ENCODE measurements at regions of chr3 and their contacts with region 1.

Region 1: GRCh38 chr3:177359593-177360357 is 162.5 kb upstream of the TBL1XR1 start:
- DNase-seq: peak; percentile 95
- H3K4me3 Mint-ChIP-seq: peak overlapping the region; percentile 61
- H3K27ac Mint-ChIP-seq: peak overlapping the region; percentile 92
- H3K4me1 Mint-ChIP-seq: peaks cover 43% of the 10 kb centered on the region
- H3K27me3 Mint-ChIP-seq: no peaks in the 10 kb centered on the region

Region 2: GRCh38 chr3:177197041-177197727 is 162.6 kb before region 1 on chr3 and contains the start of gene TBL1XR1:
- CTCF ChIA-PET with region 1: interaction called, 23 read pairs
- POLR2A ChIA-PET with region 1: interaction called, 374 read pairs
- DNase-seq: peak; percentile 90
- H3K4me3 Mint-ChIP-seq: peak within 1 kb of the TSS; percentile 98
- H3K27ac Mint-ChIP-seq: peak within 1 kb of the TSS; percentile 97
- H3K4me1 Mint-ChIP-seq: peaks cover 63% of the 10 kb centered on the region
- H3K27me3 Mint-ChIP-seq: no peaks in the 10 kb centered on the region
- total RNA-seq, gene TBL1XR1: 178 to 187 TPM

Region 3: DNA sequence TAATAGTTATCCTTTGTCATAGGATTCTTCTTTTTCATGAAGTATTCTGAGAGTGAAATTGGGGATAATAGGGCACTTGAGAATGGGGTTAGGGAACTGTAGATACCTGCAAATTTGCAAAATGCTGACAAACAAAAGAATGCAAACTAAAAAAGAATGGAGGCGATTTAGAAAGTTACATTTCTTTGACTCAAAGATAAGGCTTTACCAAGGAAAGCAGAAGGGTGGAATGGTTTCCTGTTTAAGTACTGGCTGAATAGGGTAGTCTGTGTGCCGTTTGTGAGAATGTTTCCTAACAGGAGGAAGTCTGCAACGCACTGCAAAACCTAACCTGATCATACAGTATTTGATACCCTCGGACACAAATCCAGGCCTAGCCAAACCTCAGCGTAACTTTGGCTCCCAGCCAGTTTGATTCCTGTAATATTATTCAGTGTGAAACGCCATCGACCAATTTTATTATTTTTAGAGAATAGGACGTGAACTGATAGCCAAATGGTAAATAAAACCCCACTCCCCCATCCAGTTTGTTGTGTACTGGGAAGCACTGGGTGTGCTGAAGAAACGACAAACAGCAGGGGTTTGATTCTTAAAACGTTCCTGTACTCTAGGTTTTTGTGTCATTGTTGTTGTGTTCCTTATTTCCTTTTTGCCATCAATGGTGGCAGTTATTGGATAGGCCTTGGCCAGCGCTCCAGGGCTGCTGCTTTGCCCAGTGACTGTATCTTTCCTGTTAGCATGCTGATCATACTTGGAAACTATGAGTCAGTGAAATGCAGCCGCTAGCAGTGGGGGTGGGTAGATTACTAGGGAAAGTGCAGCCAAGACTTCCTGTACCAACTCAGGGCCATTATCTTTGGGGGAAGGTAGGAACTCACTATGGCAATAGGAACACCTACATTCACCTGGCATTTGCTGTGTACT is 14.5 kb before region 1 on chr3:
- CTCF ChIA-PET with region 1: interaction called, 5 read pairs
- POLR2A ChIA-PET with region 1: interaction called, 36 read pairs
- DNase-seq: peak; percentile 82
- H3K4me3 Mint-ChIP-seq: peak overlapping the region; percentile 30
- H3K27ac Mint-ChIP-seq: peak overlapping the region; percentile 87
- H3K4me1 Mint-ChIP-seq: peaks cover 22% of the 10 kb centered on the region
- H3K27me3 Mint-ChIP-seq: peaks cover 3% of the 10 kb centered on the region

Region 4: GRCh38 chr3:177516158-177517011 is 156.6 kb after region 1 on chr3:
- CTCF ChIA-PET with region 1: no interaction called
- POLR2A ChIA-PET with region 1: no interaction called
- DNase-seq: no peak
- H3K4me3 Mint-ChIP-seq: no peak overlapping the region
- H3K27ac Mint-ChIP-seq: no peak overlapping the region
- H3K4me1 Mint-ChIP-seq: no peaks in the 10 kb centered on the region
- H3K27me3 Mint-ChIP-seq: no peaks in the 10 kb centered on the region

Region 5: GRCh38 chr3:177538750-177539730 is 179.3 kb after region 1 on chr3:
- CTCF ChIA-PET with region 1: interaction called, 11 read pairs
- POLR2A ChIA-PET with region 1: interaction called, 8 read pairs
- DNase-seq: peak; percentile 47
- H3K4me3 Mint-ChIP-seq: peak overlapping the region; percentile 43
- H3K27ac Mint-ChIP-seq: peak overlapping the region; percentile 85
- H3K4me1 Mint-ChIP-seq: peaks cover 35% of the 10 kb centered on the region
- H3K27me3 Mint-ChIP-seq: no peaks in the 10 kb centered on the region

Region 6: GRCh38 chr3:177777699-177778098 is 417.9 kb after region 1 on chr3:
- CTCF ChIA-PET with region 1: interaction called, 11 read pairs
- POLR2A ChIA-PET with region 1: interaction called, 4 read pairs
- DNase-seq: peak; percentile 54
- H3K4me3 Mint-ChIP-seq: no peak overlapping the region
- H3K27ac Mint-ChIP-seq: peak overlapping the region; percentile 52
- H3K4me1 Mint-ChIP-seq: peaks cover 17% of the 10 kb centered on the region
- H3K27me3 Mint-ChIP-seq: no peaks in the 10 kb centered on the region